ENCODE measurements at regions of chr12 and their contacts with region 1.

Region 1: DNA sequence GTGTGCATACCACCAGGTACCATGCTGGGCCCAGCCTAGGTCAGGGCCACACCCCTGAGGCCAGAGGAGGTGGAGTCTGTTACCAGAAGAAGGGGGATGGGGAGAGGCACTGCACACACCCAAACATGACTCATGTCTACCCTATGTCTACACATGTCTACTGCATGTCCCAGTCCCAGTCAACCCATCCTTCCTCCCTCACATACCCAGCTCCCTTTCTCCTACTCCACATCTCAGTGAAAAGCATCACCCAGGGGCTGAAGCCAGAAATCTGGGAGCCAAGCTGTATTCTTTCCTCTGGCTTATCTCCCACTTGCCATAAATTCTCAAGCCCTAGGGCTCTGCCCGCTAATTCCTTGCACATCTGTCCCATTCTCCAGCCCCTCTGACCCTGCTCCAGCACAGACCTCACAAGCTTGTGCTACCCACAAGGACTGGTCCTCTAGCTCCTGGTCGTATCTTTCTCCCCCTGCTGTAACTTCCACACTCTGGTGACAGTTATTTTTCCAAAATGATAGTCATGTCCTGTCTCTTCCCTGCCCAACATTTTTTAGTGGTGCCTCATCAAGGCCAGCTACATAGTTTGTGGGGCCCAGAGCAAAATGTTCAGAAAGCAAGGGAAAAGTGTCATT is 18.0 kb upstream of the APPL2 start:
- DNase-seq: peak; percentile 66
- H3K4me3 ChIP-seq: peak overlapping the region in 1 of 3 experiments; percentile 11
- H3K27ac ChIP-seq: peak overlapping the region; percentile 79
- H3K4me1 ChIP-seq: peaks cover 40% of the 10 kb centered on the region
- H3K27me3 ChIP-seq: no peaks in the 10 kb centered on the region
- CTCF ChIP-seq: no peak

Region 2: DNA sequence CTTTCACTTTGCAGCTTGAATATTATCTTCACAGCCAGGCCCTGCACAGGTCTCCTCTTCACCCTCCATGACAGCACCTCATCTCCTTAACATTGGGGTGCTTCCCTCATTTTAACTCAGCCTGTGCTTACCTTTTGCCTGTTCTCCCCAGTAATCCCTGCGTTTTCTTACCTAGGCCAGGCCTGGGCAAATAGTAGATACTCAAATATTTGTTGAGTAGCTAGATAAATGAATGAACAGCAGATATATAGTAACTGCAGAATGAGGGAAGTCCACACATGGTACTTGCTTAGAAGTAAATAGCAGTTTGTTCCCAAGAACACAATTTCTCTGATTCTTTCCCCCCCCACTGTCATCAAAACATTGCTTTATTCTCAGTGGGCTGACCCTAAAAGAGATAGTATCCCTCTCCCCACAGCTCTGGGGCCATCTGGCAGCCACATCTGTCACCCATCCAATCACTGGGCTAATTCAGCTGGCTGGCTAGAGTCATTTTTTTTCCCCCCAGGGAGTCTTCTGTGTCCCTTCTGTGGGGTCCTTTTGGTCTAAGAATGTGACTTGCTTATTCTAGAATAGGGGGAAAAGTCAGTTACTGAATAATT is 61.3 kb before region 1 on chr12:
- CTCF ChIA-PET with region 1: no interaction called
- dilution Hi-C with region 1: no loop called
- in situ Hi-C with region 1: no loop called
- intact Hi-C with region 1: no loop called
- DNase-seq: no peak
- H3K4me3 ChIP-seq: no peak overlapping the region
- H3K27ac ChIP-seq: no peak overlapping the region
- H3K4me1 ChIP-seq: no peaks in the 10 kb centered on the region
- H3K27me3 ChIP-seq: no peaks in the 10 kb centered on the region
- CTCF ChIP-seq: no peak

Region 3: DNA sequence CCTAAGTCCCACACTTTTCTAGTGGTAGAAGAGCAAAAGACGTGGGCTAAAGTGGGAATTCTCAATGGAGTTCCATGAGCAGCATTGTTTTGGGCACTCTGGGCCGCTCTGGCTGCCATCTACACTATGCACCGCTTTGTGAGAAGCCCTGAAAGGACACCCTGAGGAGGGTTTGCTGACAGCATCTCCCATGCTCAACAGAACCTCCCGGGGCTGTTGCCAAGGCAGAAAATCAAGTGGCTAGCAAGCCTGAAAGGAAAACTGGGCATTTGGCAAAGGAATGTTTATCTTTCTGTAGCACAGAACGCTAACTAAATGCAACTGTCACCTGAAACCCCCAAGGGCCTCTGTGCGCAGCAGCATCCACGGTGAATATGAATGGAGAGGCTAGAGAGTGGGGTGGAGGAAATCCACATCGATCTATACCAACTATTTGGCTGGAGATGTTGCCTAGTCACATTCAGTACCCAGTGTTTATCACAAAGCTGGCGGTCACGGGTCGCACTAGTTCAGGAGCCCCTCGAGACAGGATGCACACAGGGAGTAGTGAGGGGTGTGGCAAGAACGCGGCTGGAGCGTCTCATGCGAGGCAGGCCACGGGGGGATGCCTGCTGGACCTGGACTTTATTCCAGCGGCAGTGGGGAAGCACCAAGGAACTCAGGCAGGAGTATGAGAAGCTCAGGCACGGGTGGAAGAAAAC is 32.3 kb before region 1 on chr12:
- CTCF ChIA-PET with region 1: no interaction called
- dilution Hi-C with region 1: loop called (anchors 5 kb)
- in situ Hi-C with region 1: no loop called
- intact Hi-C with region 1: no loop called
- DNase-seq: no peak
- H3K4me3 ChIP-seq: no peak overlapping the region
- H3K27ac ChIP-seq: no peak overlapping the region
- H3K4me1 ChIP-seq: no peaks in the 10 kb centered on the region
- H3K27me3 ChIP-seq: no peaks in the 10 kb centered on the region
- CTCF ChIP-seq: no peak

Region 4: GRCh38 chr12:105317942-105318621 is 64.1 kb after region 1 on chr12:
- CTCF ChIA-PET with region 1: no interaction called
- dilution Hi-C with region 1: loop called (anchors 10 kb)
- in situ Hi-C with region 1: no loop called
- intact Hi-C with region 1: no loop called
- DNase-seq: no peak
- H3K4me3 ChIP-seq: no peak overlapping the region
- H3K27ac ChIP-seq: no peak overlapping the region
- H3K4me1 ChIP-seq: peaks cover 29% of the 10 kb centered on the region
- H3K27me3 ChIP-seq: no peaks in the 10 kb centered on the region
- CTCF ChIP-seq: no peak

Region 5: GRCh38 chr12:105330283-105330930 is 76.4 kb after region 1 on chr12 and contains the start of gene C12orf75:
- CTCF ChIA-PET with region 1: interaction called, 3 read pairs
- dilution Hi-C with region 1: loop called (anchors 5 kb)
- in situ Hi-C with region 1: no loop called
- intact Hi-C with region 1: loop called (anchors 5 kb)
- DNase-seq: peak; percentile 60
- H3K4me3 ChIP-seq: peak within 1 kb of the TSS; percentile 53 to 79 (median 72)
- H3K27ac ChIP-seq: peak within 1 kb of the TSS; percentile 66
- H3K4me1 ChIP-seq: peaks cover 51% of the 10 kb centered on the region
- H3K27me3 ChIP-seq: no peaks in the 10 kb centered on the region
- CTCF ChIP-seq: no peak
- total RNA-seq, gene C12orf75: 88.7 to 177 TPM